Panc1 (cell line): ENCODE measurements at regions of chr9 and their contacts with region 1.

Region 1: GRCh38 chr9:21579209-21579608 is 97.1 kb upstream of the IFNE start:
- DNase-seq: no peak
- ATAC-seq: peak; percentile 71
- H3K4me3 ChIP-seq: peak overlapping the region in 1 of 2 experiments; percentile 23; a peak in 3 of 4 replicates
- H3K27ac ChIP-seq: peak overlapping the region; percentile 100
- H3K4me1 ChIP-seq: peaks cover 79% of the 10 kb centered on the region
- H3K27me3 ChIP-seq: no peaks in the 10 kb centered on the region
- CTCF ChIP-seq: no peak

Region 2: GRCh38 chr9:21656776-21657674 is 77.8 kb after region 1 on chr9:
- CTCF ChIA-PET with region 1: no interaction called
- POLR2A ChIA-PET with region 1: interaction called, 10 read pairs
- in situ Hi-C with region 1: no loop called
- intact Hi-C with region 1: no loop called
- DNase-seq: no peak
- ATAC-seq: peak; percentile 51
- H3K4me3 ChIP-seq: no peak overlapping the region
- H3K27ac ChIP-seq: peak overlapping the region; percentile 86
- H3K4me1 ChIP-seq: peaks cover 34% of the 10 kb centered on the region
- H3K27me3 ChIP-seq: no peaks in the 10 kb centered on the region
- CTCF ChIP-seq: no peak